Gastrocnemius medialis (tissue), 4 donors: ENCODE measurements at regions of chr2 and their contacts with region 1.

Region 1: DNA sequence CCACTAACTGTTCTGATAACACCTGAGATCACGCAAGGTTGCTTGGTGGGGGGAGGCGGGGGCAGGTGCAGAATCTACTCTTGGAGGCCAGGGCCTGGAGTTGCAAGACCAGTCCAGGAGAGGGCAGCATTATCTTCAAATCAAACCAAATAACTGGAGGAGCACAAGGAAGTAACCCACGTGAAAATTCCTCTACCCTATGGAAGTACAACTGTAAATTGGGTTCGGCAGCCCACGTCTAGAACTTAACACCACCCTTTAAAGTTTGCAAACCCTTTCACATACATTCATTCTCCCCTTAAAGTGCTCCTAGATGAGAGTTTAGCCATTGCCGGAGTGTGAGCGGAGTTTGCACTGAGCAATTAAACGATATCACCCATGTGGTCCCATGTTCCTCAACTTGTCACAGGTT is 19.6 kb upstream of the CXCR1 start:
- DNase-seq: peak; percentile 22 to 69
- ATAC-seq: peak; percentile 94 to 98
- H3K4me3 ChIP-seq: no peak overlapping the region
- H3K27ac ChIP-seq: peak overlapping the region in 3 of 4 donors; percentile 8 to 58 (median 10)
- H3K4me1 ChIP-seq: peaks cover 11 to 14% of the 10 kb centered on the region in 2 donors
- H3K27me3 ChIP-seq: no peaks in the 10 kb centered on the region
- CTCF ChIP-seq: peak; percentile 67 to 87 (median 83)
- POLR2A ChIP-seq: no peak

Region 2: DNA sequence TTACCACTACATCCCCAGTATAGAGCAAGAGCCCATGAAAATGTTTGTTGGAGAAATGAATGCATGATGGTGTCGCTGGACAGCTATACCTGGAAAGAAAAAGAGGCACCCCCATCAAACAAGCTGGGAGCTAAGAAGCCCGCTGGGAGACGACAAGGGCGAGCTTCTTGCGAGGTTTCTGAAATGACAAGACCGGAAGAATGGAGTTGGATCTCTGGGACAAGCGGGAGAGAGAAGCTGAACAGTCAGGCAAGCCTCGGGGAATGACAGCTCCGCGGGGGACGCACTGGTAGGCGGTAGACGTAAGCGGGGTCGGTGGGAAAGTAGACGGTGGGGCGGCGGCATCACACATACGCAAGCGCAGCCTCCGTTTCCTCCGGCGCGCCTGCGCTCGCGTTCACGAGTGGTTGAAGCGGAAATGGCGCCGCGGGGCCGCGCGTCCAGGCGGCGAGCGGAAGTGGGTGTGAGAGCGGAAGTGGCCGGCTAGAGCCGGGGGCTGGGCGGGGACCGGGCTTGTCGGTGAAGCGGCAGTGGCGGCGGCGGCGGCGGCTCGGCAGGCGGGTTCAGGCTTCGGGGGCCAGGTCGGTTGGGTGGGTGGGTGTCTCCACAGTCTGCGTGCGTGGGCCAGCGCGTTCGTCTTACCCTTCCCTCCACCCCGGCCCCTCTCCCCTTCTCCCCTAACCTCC is 30.5 kb after region 1 on chr2 and contains the start of gene ARPC2:
- in situ Hi-C with region 1: no loop called
- intact Hi-C with region 1: loop called (anchors 2 kb)
- DNase-seq: peak; percentile 86 to 91
- ATAC-seq: peak; percentile 85 to 88
- H3K4me3 ChIP-seq: peak within 1 kb of the TSS; percentile 87 to 99 (median 94)
- H3K27ac ChIP-seq: peak within 1 kb of the TSS; percentile 96 to 99 (median 97)
- H3K4me1 ChIP-seq: peaks cover 38 to 47% of the 10 kb centered on the region in 2 donors
- H3K27me3 ChIP-seq: no peaks in the 10 kb centered on the region
- CTCF ChIP-seq: peak; percentile 9 to 46 (median 42)
- POLR2A ChIP-seq: peak; percentile 92
- total RNA-seq, gene ARPC2: 181 to 231 (median 193) TPM

Region 3: GRCh38 chr2:218257390-218257981 is 71.1 kb after region 1 on chr2:
- in situ Hi-C with region 1: loop called in 3 of 4 experiments (anchors 10 kb)
- intact Hi-C with region 1: loop called (anchors 2 kb)
- DNase-seq: peak in 1 of 2 donors; percentile 9
- ATAC-seq: peak; percentile 8 to 38
- H3K4me3 ChIP-seq: no peak overlapping the region
- H3K27ac ChIP-seq: peak overlapping the region in 2 of 4 donors; percentile 9 to 14
- H3K4me1 ChIP-seq: peaks cover 35 to 36% of the 10 kb centered on the region in 2 donors
- H3K27me3 ChIP-seq: no peaks in the 10 kb centered on the region
- CTCF ChIP-seq: peak; percentile 38 to 66 (median 59)
- POLR2A ChIP-seq: no peak

Region 4: GRCh38 chr2:218284106-218284811 is 97.9 kb after region 1 on chr2:
- in situ Hi-C with region 1: no loop called
- intact Hi-C with region 1: no loop called
- DNase-seq: peak; percentile 82 to 89
- ATAC-seq: peak; percentile 34 to 57
- H3K4me3 ChIP-seq: peak overlapping the region; percentile 24 to 40 (median 32)
- H3K27ac ChIP-seq: peak overlapping the region; percentile 93 to 100 (median 98)
- H3K4me1 ChIP-seq: peaks cover 76 to 84% of the 10 kb centered on the region in 2 donors
- H3K27me3 ChIP-seq: no peaks in the 10 kb centered on the region
- CTCF ChIP-seq: no peak
- POLR2A ChIP-seq: peak in 1 of 2 donors; percentile 60

Region 5: GRCh38 chr2:218367415-218368153 is 181.2 kb after region 1 on chr2:
- in situ Hi-C with region 1: loop called in 1 of 4 experiments (anchors 25 kb)
- intact Hi-C with region 1: no loop called
- DNase-seq: peak; percentile 67 to 73
- ATAC-seq: peak; percentile 74 to 77
- H3K4me3 ChIP-seq: peak overlapping the region; percentile 45 to 69 (median 62)
- H3K27ac ChIP-seq: peak overlapping the region; percentile 76 to 87 (median 80)
- H3K4me1 ChIP-seq: peaks cover 0 to 5% of the 10 kb centered on the region in 2 donors
- H3K27me3 ChIP-seq: no peaks in the 10 kb centered on the region
- CTCF ChIP-seq: no peak
- POLR2A ChIP-seq: peak; percentile 70 to 77